GM10248 (cell line): ENCODE measurements at regions of chr11 and their contacts with region 1.

Region 1: DNA sequence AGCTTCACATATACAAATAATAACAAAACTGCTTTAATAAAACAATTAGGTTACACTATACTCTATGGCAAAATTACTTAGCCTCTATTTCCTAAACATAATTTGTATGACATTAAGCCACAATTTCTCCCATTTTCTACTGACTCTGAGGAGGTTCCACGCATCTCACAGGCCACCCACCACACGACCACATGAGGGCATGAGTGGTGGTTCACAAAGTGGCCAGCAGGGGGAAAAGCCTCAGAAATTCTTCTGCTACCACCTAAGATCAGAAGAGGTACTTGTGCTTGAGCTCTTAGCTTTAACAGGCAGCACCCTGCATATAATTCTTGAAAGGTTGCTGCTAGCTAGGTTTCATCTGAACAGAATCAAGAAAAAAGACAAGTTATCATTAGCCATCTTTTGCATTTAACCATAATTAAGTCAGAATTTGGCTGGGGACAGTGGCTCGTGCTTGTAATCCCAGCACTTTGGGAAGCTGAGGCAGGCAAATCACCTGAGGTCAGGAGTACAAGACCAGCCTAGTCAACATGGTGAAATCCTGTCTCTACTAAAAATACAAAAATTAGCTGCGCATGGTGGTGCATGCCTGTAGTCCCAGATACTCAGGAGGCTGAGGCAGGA is 7.7 kb downstream of the LPXN start:
- DNase-seq: peak; percentile 45
- CTCF ChIP-seq: peak; percentile 64

Region 2: DNA sequence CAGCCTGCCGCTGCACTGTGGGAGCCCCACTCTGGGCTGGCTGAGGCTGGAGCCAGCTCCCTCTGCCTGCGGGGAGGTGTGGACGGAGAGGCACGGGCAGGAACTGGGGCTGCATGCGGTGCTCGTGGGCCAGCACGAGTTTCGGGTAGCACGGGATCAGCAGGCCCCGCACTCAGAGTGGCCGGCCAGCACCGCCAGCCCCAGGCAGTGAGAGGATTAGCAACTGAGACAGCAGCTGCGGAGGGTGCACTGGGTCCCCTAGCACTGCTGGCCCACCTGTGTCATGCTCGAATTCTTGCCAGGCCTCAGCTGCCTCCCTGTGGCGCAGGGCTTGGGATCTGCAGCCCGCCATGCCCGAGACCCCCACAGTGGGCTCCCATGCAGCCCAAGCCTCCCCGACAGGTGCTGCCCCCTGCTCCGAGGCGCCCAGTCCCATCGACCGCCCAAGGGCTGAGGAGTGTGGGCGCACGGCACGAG is 36.1 kb before region 1 on chr11:
- CTCF ChIA-PET with region 1: interaction called, 16 read pairs
- POLR2A ChIA-PET with region 1: no interaction called
- DNase-seq: no peak
- CTCF ChIP-seq: no peak

Region 3: GRCh38 chr11:58579192-58580129 is 11.5 kb after region 1 on chr11:
- CTCF ChIA-PET with region 1: interaction called, 40 read pairs
- POLR2A ChIA-PET with region 1: interaction called, 11 read pairs
- DNase-seq: peak; percentile 77
- CTCF ChIP-seq: peak; percentile 91

Region 4: DNA sequence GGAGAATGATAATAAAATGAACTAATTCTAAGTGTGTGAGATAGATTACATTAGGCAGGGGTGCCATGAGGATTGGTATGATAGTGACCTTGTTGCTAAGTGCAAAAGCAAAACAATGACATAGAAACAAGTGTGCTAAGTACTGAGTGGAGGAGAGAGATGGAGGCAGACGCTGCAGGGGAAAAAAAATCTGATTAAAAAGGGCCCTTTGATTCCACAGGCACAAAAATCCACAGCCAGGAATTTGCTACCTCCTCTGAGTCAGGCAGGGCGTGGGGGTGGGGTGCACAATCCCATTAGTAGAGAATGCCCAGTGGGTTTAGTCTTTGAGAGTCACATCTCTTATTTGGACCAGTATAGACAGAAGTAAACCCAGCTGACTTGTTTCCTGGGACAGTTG is 54.3 kb after region 1 on chr11 and contains the start of gene CNTF:
- CTCF ChIA-PET with region 1: interaction called, 49 read pairs
- POLR2A ChIA-PET with region 1: interaction called, 3 read pairs
- DNase-seq: no peak
- CTCF ChIP-seq: no peak